ENCODE measurements at regions of chr5 and their contacts with region 1.

Region 1: DNA sequence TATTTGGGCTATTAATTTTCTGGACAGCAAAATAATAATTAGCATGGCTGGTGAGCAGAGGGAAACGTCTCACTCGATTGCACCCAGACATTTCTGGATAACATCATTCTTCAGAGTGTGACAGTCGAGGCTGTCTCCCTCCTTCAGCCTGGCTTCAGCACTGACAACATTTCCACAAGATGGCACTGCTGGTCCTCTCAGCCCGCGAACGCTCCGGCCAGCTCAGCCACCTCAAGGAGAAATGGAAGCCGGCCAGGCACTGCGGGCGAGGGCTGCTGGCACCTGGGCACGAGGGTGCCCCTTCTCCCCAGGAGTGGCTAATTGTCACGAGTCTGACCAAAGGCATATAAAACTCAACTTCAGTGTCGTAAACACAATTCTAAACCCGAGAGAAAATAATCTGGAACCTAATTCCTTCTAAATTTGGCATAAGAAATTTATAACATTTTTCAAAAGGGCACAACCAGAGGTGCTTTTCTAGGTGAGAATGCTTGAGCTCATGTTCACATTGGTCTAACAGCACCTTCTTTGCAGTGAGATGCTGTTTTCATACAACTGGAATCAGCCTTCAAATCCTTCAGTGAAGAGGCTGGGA is 65.9 kb downstream of the DAP start:
- DNase-seq: peak; percentile 66 to 93
- H3K4me3 ChIP-seq: no peak overlapping the region
- H3K27ac ChIP-seq: peak overlapping the region; percentile 42
- H3K4me1 ChIP-seq: peaks cover 24% of the 10 kb centered on the region
- H3K27me3 ChIP-seq: no peaks in the 10 kb centered on the region
- CTCF ChIP-seq: peak; percentile 90

Region 2: GRCh38 chr5:10315824-10316509 is 379.2 kb before region 1 on chr5:
- CTCF ChIA-PET with region 1: no interaction called
- POLR2A ChIA-PET with region 1: no interaction called
- intact Hi-C with region 1: no loop called
- DNase-seq: no peak
- H3K4me3 ChIP-seq: no peak overlapping the region
- H3K27ac ChIP-seq: no peak overlapping the region
- H3K4me1 ChIP-seq: peaks cover 5% of the 10 kb centered on the region
- H3K27me3 ChIP-seq: no peaks in the 10 kb centered on the region
- CTCF ChIP-seq: no peak

Region 3: DNA sequence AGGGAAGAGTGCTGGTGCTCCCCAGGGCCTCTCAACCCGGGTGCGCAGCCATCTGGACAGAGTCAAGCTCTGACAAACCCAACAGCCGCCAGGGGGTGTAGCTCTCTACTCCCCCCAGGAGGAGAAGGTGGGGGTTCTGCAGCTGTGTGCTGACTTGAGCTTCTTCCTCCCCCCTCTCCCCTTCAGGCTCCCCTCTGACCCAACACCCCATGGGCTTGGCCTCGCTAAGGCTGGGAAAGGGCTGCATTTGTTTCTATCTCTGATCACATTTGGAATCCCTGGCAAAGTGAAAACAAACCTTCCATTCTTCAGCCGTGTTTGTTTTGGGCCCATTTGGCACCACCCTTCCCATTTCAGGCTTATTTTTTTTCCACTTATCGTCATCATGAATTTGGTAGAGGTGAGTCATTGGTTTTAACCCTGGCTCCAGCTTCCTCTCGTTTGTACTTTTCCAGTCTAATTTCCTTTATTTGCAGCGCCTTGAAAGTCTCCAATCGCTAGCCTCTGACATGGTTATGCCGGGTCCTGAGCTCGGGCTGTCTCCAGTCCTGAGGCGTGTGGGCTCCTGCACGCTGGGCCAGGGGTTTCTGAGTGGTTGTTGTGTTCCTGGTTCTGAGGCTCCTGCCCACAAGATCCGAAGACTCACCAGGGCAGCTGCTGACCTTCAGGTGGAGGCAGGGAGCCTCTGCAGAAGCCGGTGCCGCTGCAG is 29.8 kb after region 1 on chr5:
- CTCF ChIA-PET with region 1: interaction called, 12 read pairs
- POLR2A ChIA-PET with region 1: no interaction called
- intact Hi-C with region 1: no loop called
- DNase-seq: peak; percentile 86 to 97
- H3K4me3 ChIP-seq: peak overlapping the region; percentile 43; the same call in 1 of the 2 replicates
- H3K27ac ChIP-seq: peak overlapping the region; percentile 91
- H3K4me1 ChIP-seq: peaks cover 78% of the 10 kb centered on the region
- H3K27me3 ChIP-seq: no peaks in the 10 kb centered on the region
- CTCF ChIP-seq: peak; percentile 69

Region 4: DNA sequence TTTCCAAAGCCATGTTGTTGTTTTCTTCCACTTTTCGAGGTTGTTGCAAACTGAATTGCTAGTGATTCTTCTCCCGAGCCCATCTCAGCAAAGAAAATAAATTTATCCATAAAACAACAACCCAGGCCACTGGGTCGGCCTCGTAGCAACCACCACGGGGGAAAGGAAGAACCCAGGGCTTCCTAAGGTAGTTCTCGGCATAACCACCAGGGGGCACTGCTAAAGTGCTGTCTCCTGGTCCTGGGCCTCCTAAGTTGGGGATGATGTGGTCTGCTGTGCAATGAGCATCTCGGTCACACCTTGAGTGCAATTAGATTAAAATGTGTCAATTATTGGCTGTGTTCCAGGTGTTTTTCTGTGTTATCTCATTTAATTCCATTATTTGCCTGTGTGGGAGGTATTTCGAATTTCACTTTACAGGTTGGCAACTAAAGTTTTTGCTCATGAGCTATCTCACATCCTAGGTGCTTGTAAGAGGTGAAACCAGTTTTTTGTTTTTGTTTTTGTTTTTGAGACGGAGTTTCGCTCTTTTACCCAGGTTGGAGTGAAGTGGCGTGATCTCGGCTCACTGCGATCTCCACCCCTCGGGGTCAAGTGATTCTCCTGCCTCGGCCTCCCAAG is 168.7 kb after region 1 on chr5:
- CTCF ChIA-PET with region 1: no interaction called
- POLR2A ChIA-PET with region 1: no interaction called
- intact Hi-C with region 1: loop called (anchors 2 kb)
- DNase-seq: peak in 1 of 2 experiments; percentile 62
- H3K4me3 ChIP-seq: no peak overlapping the region
- H3K27ac ChIP-seq: no peak overlapping the region
- H3K4me1 ChIP-seq: no peaks in the 10 kb centered on the region
- H3K27me3 ChIP-seq: no peaks in the 10 kb centered on the region
- CTCF ChIP-seq: peak; percentile 94

Region 5: DNA sequence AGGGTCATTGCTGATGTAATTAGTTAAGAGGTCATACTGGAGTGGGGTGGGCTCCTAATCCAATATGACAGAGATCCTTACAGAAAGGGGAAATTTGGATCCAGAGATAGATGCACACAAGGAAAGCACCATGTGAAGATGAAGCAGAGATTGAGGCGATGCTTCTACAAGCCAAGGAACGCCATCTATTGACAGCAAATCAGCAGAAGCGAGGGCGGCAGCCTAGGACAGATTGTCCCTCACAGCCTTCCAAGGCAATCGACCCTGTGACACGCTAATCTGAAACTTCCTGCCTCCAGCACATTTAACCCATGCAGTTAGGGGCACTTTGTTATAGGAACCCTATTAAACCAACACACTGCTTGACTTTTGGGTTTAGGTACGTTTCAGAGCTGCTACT is 351.0 kb after region 1 on chr5:
- CTCF ChIA-PET with region 1: no interaction called
- POLR2A ChIA-PET with region 1: no interaction called
- intact Hi-C with region 1: loop called (anchors 1 kb)
- DNase-seq: no peak
- H3K4me3 ChIP-seq: no peak overlapping the region
- H3K27ac ChIP-seq: no peak overlapping the region
- H3K4me1 ChIP-seq: no peaks in the 10 kb centered on the region
- H3K27me3 ChIP-seq: no peaks in the 10 kb centered on the region
- CTCF ChIP-seq: no peak

Region 6: DNA sequence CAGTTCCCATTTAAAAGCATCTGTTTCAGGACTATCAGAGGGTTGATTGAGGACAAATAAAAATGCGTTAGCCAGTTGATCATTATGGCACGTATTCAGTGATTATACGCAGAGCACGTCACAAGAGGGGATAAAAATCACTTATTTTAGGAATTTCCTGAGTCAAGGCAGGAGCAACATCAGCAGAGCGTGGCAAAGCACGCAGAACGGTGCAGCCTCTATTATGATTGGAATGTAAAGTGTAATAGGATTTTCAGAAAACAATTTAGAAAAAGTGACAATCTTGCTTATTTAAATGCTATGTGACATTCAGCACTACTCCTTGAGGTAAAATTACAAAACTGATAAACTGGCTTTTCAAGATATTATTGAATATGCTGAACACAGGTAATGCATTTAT is 479.4 kb after region 1 on chr5:
- CTCF ChIA-PET with region 1: no interaction called
- POLR2A ChIA-PET with region 1: no interaction called
- intact Hi-C with region 1: loop called (anchors 2 kb)
- DNase-seq: no peak
- H3K4me3 ChIP-seq: no peak overlapping the region
- H3K27ac ChIP-seq: no peak overlapping the region
- H3K4me1 ChIP-seq: no peaks in the 10 kb centered on the region
- H3K27me3 ChIP-seq: peaks cover 31% of the 10 kb centered on the region; the same call in 1 of the 2 replicates
- CTCF ChIP-seq: no peak

Region 7: DNA sequence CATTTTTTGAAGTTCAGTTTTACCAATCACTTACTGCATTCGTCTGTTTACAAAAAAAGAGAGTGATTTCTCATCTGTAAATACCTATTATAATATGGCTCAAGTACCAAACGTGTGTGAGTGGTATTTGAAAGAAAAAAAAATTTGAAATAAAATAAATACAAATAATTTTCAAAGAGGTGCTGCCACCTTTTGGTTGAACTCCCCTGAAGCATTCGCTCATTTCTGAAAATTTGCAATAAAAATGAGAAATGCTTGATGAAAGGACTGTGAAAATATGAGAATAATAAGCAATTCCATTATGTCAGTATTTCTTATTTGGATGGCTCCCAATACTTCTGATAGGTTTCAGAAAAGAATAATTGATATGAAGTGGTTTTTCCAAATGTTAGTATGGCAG is 799.2 kb after region 1 on chr5:
- CTCF ChIA-PET with region 1: no interaction called
- POLR2A ChIA-PET with region 1: no interaction called
- intact Hi-C with region 1: loop called (anchors 1 kb)
- DNase-seq: no peak
- H3K4me3 ChIP-seq: no peak overlapping the region
- H3K27ac ChIP-seq: no peak overlapping the region
- H3K4me1 ChIP-seq: no peaks in the 10 kb centered on the region
- H3K27me3 ChIP-seq: no peaks in the 10 kb centered on the region
- CTCF ChIP-seq: peak; percentile 76

Region 8: DNA sequence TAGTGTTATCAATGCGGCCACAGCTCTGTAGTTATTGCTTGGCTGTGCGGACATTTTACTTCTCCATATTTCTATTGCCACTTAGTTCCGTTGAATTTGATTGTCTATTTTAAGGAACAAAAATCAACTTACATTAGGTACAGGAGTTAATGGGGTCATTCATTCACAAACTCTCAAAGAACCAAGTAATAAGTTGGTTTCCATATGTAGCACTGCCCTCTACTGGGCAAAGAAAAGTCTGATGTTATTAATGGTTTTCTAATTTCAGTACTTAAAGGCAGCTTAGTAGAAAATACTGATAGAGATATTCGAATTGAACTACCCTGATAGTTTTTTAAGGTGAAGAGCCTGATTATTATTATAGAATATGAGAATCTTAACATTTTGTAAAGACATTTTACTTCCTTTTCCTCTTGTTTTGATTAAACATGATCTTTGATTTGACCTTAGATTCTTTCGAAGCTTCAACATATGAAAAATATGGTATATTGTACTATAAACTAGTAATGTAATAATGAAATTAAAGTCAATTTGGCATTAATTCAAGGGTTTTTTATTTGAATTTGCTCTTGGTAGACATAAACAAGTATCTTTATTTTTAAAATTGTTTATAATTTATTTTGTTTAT is 1328.6 kb after region 1 on chr5:
- CTCF ChIA-PET with region 1: no interaction called
- POLR2A ChIA-PET with region 1: no interaction called
- intact Hi-C with region 1: loop called (anchors 2 kb)
- DNase-seq: no peak
- H3K4me3 ChIP-seq: no peak overlapping the region
- H3K27ac ChIP-seq: no peak overlapping the region
- H3K4me1 ChIP-seq: no peaks in the 10 kb centered on the region
- H3K27me3 ChIP-seq: no peaks in the 10 kb centered on the region
- CTCF ChIP-seq: peak; percentile 83

Measured in PC-9 (cell line).